ENCODE measurements at regions of chr7 and their contacts with region 1.

Region 1: DNA sequence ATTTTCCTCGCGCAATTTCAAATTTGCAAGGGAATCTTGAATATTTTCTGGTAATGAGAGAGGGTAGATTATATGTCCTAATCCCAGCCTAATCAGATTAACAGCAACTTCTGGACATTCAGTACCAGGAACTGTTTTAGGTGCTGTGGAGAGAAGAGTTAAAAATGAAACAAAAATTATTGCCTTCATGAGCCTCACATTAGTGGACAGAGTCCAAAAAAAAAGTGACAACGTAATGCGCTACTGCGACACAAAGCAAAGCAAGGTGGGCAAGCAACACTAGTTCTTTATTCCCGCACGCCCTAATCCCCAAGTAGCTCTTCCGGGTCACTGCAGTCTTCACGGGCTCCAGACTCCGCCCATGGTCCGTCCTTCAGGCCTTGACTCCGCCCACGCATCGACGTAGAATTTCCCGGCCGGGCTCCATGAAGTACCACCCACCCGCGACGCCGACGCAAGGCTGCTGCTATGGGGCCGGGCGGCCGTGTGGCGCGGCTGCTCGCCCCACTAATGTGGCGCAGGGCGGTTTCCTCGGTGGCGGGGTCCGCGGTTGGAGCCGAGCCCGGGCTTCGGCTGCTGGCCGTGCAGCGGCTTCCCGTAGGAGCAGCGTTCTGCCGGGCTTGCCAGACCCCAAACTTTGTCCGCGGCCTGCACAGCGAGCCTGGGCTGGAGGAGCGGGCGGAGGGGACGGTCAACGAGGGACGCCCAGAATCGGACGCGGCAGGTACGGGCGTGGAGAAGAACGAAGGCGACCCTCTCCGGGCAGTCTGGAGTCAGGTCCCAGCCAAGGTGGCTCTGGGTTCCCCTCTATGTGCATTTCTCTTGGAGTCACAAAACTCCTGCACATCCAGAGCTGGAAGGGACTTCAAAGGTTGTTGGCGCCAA is at the start of gene MALSU1:
- DNase-seq: peak; percentile 97
- CTCF ChIP-seq: no peak

Region 2: GRCh38 chr7:23431702-23432199 is 132.6 kb after region 1 on chr7:
- in situ Hi-C with region 1: no loop called
- DNase-seq: no peak
- CTCF ChIP-seq: no peak

Region 3: DNA sequence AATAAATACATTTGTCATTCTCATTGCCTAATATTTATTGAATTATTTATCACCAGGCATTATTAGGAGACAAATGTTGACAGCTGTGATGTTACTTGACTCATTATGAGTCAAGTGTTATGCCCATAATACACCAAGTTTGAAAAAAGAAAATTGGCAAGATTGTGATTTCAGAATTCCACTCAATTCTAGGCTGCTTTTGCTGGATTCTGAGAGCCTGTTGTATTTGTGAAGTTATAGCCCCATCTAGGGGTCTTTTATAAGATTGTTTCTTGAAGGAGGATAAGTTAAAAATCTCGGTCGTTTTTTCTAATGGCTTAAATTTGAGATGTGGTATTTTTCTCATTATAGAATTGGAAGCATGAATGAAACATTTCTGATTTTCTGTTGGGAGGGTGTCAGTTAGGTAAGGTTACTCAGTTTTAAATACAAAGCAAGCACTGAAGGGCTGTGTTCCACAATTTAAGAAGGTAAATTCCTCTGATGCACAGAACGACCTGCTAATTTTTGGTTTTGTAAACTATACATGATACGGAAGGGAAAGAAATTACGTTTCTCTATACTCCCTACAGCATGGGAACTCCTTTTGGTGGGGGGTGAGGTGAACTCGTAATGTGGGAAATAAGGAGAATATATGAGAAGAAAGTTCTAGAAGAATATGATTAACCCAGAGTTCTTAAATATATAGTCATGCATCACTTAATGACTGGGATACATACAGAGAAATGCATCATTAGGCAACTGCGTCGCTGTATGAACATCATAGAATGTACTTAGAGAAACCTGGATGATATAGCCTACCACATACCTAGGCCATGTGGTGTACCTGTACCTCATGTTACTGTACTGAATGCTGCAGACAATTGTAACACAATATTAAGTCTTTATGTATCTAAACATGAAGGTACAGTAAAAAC is 413.5 kb after region 1 on chr7:
- in situ Hi-C with region 1: loop called (anchors 25 kb)
- DNase-seq: peak; percentile 68
- CTCF ChIP-seq: peak; percentile 21

Measured in GM13976 (cell line).